ENCODE measurements at regions of chr20 and their contacts with region 1.

Region 1: GRCh38 chr20:62791301-62792181 is 4.7 kb upstream of the MRGBP start:
- DNase-seq: peak; percentile 89 to 92 (median 89)
- H3K4me3 ChIP-seq: peak overlapping the region in 1 of 7 experiments; percentile 8
- H3K27ac ChIP-seq: no peak overlapping the region
- H3K4me1 ChIP-seq: peaks cover 0 to 42% (median 30%) of the 10 kb centered on the region in 4 experiments
- H3K27me3 ChIP-seq: no peaks in the 10 kb centered on the region

Region 2: GRCh38 chr20:62500237-62500864 is 291.2 kb before region 1 on chr20:
- CTCF ChIA-PET with region 1: interaction called, 12 read pairs
- POLR2A ChIA-PET with region 1: no interaction called
- DNase-seq: peak; percentile 67 to 80 (median 77)
- H3K4me3 ChIP-seq: no peak overlapping the region
- H3K27ac ChIP-seq: no peak overlapping the region
- H3K4me1 ChIP-seq: peaks cover 0 to 33% (median 21%) of the 10 kb centered on the region in 4 experiments
- H3K27me3 ChIP-seq: peaks cover 0 to 5% (median 0%) of the 10 kb centered on the region in 5 experiments

Region 3: GRCh38 chr20:62663129-62664018 is 128.2 kb before region 1 on chr20:
- CTCF ChIA-PET with region 1: interaction called, 10 read pairs
- POLR2A ChIA-PET with region 1: no interaction called
- DNase-seq: no peak
- H3K4me3 ChIP-seq: no peak overlapping the region
- H3K27ac ChIP-seq: no peak overlapping the region
- H3K4me1 ChIP-seq: no peaks in the 10 kb centered on the region
- H3K27me3 ChIP-seq: no peaks in the 10 kb centered on the region

Region 4: GRCh38 chr20:62685781-62686555 is 105.6 kb before region 1 on chr20:
- CTCF ChIA-PET with region 1: interaction called, 13 read pairs
- POLR2A ChIA-PET with region 1: interaction called, 3 read pairs
- DNase-seq: peak; percentile 76 to 94 (median 91)
- H3K4me3 ChIP-seq: peak overlapping the region in 4 of 7 experiments; percentile 8 to 52 (median 50)
- H3K27ac ChIP-seq: no peak overlapping the region
- H3K4me1 ChIP-seq: peaks cover 3 to 39% (median 31%) of the 10 kb centered on the region in 4 experiments
- H3K27me3 ChIP-seq: no peaks in the 10 kb centered on the region

Region 5: GRCh38 chr20:62822788-62823651 is 31.5 kb after region 1 on chr20:
- CTCF ChIA-PET with region 1: no interaction called
- POLR2A ChIA-PET with region 1: no interaction called
- DNase-seq: peak; percentile 72 to 86 (median 78)
- H3K4me3 ChIP-seq: no peak overlapping the region
- H3K27ac ChIP-seq: no peak overlapping the region
- H3K4me1 ChIP-seq: peaks cover 0 to 39% (median 19%) of the 10 kb centered on the region in 4 experiments
- H3K27me3 ChIP-seq: peaks cover 0 to 11% (median 7%) of the 10 kb centered on the region in 5 experiments

Measured in common myeloid progenitor, CD34-positive (primary cell).